Right cardiac atrium (tissue), 5 donors: ENCODE measurements at regions of chr3 and their contacts with region 1.

Region 1: GRCh38 chr3:8441969-8442559 is 59.6 kb upstream of the LMCD1 start:
- DNase-seq: no peak
- ATAC-seq: peak; percentile 55 to 66
- H3K4me3 ChIP-seq: no peak overlapping the region
- H3K27ac ChIP-seq: no peak overlapping the region
- H3K4me1 ChIP-seq: peaks cover 3% of the 10 kb centered on the region
- H3K27me3 ChIP-seq: no peaks in the 10 kb centered on the region

Region 2: GRCh38 chr3:8324740-8325139 is 117.3 kb before region 1 on chr3:
- intact Hi-C with region 1: no loop called
- DNase-seq: peak; percentile 46 to 80 (median 71)
- ATAC-seq: peak; percentile 75 to 82
- H3K4me3 ChIP-seq: no peak overlapping the region
- H3K27ac ChIP-seq: no peak overlapping the region
- H3K4me1 ChIP-seq: no peaks in the 10 kb centered on the region
- H3K27me3 ChIP-seq: no peaks in the 10 kb centered on the region

Region 3: DNA sequence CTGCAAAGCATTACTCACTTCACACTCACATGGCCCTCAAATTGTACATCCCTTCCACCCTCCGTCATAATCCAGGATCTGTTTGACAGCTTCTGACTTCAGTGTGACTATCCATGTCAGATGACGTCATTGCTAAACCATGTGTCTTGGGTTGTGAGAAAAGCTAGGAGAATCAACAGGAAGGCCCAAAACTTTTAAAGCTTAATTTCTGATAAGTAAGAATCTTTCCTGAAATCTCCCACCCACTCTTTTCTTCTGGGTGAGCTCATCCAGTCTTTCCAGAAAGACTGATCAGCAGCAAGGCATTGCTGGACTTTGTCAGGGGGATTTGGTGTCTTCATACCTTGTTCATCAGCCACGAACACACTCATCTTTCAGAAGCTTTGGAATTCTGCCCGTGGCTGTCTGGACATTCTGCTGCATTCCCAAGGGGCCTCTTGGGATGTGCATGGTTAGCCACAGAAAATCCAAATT is 48.1 kb after region 1 on chr3:
- intact Hi-C with region 1: loop called in 1 of 4 experiments (anchors 10 kb)
- DNase-seq: no peak
- ATAC-seq: peak in 1 of 2 donors; percentile 34
- H3K4me3 ChIP-seq: no peak overlapping the region
- H3K27ac ChIP-seq: no peak overlapping the region
- H3K4me1 ChIP-seq: peaks cover 6% of the 10 kb centered on the region
- H3K27me3 ChIP-seq: no peaks in the 10 kb centered on the region

Region 4: GRCh38 chr3:8607234-8608040 is 165.4 kb after region 1 on chr3:
- intact Hi-C with region 1: loop called (anchors 5 kb)
- DNase-seq: peak; percentile 79 to 92 (median 87)
- ATAC-seq: peak; percentile 97 to 98
- H3K4me3 ChIP-seq: no peak overlapping the region
- H3K27ac ChIP-seq: no peak overlapping the region
- H3K4me1 ChIP-seq: peaks cover 10% of the 10 kb centered on the region
- H3K27me3 ChIP-seq: no peaks in the 10 kb centered on the region

Region 5: GRCh38 chr3:8622873-8623691 is 181.0 kb after region 1 on chr3:
- intact Hi-C with region 1: loop called in 3 of 4 experiments (anchors 2 to 5 kb)
- DNase-seq: peak; percentile 70 to 87 (median 84)
- ATAC-seq: peak; percentile 88 to 89
- H3K4me3 ChIP-seq: no peak overlapping the region
- H3K27ac ChIP-seq: no peak overlapping the region
- H3K4me1 ChIP-seq: no peaks in the 10 kb centered on the region
- H3K27me3 ChIP-seq: no peaks in the 10 kb centered on the region